GM18951 (cell line): ENCODE measurements at regions of chr10 and their contacts with region 1.

Region 1: GRCh38 chr10:26334932-26335573 is 103.1 kb upstream of the APBB1IP start:
- POLR2A ChIP-seq: no peak

Region 2: GRCh38 chr10:26556748-26557640 is 221.9 kb after region 1 on chr10:
- in situ Hi-C with region 1: loop called (anchors 5 kb)
- POLR2A ChIP-seq: no peak

Region 3: GRCh38 chr10:26697163-26697921 is 362.3 kb after region 1 on chr10 and contains the start of gene PDSS1:
- in situ Hi-C with region 1: loop called (anchors 25 kb)
- POLR2A ChIP-seq: peak; percentile 88

Region 4: GRCh38 chr10:26881600-26882331 is 546.7 kb after region 1 on chr10:
- in situ Hi-C with region 1: loop called (anchors 5 kb)
- POLR2A ChIP-seq: no peak